H1 (cell line): ENCODE measurements at regions of chr10 and their contacts with region 1.

Region 1: DNA sequence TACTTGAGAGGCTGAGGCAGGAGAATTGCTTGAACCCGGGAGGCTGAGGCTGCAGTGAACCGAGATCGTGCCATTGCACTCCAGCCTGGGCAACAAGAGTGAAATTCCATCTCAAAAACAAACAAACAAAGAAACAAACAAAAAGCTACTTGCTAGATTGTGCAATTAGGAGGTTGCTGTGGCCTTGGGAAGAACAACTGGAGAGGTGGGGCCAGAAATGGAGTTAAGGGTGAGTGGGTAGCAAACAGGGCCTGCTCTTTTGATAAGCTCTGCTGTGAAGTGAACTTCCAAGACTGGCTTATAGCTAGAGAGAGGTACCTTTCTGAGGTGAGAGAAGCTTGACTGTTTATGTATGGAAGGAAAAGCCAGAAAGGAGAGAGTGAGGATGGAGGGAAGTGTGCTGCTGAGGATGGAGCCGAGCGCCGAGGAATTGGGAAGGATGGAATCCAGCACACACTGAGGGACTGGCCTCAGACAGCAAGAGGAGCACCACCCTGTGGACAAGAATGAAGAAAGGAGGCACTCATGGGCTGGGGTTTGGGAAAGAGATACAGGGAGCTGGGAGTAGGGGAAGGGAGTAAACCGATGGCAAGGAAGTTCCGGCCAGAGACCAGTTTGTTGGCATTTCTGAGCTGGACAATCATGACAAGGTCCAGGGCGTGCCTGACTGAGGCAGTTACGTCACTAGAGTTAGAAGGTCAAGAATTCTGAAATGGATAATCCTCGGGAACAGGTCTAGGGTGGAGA is 7.0 kb upstream of the RPEL1 start:
- DNase-seq: peak in 1 of 2 experiments; percentile 39
- H3K4me3 ChIP-seq: no peak overlapping the region
- H3K27ac ChIP-seq: no peak overlapping the region
- H3K4me1 ChIP-seq: peaks cover 2 to 8% (median 6%) of the 10 kb centered on the region in 4 experiments; a peak in 6 of 7 replicates
- H3K27me3 ChIP-seq: no peaks in the 10 kb centered on the region
- CTCF ChIP-seq: peak; percentile 54 to 78 (median 65)
- EP300 ChIP-seq: no peak
- POLR2A ChIP-seq: no peak
- RAD21 ChIP-seq: peak; percentile 86

Region 2: DNA sequence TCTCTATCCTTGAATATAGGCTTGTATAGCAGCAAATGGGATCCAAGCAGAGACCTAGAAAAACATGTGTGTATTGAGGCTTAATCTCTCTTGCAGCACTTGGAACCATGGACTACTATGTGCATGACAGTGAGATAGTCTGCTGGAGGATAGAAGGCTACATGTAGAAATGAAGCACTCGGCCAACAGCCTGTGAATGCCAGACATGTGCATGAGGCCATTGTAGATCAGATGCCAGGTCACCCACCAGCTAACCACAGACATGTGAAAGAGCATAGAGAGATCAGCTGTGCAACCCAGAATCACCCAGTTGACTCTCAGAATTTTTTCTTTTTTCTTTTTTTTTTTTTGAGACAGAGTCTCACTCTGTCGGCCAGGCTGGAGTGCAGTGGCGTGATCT is 136.5 kb before region 1 on chr10:
- CTCF ChIA-PET with region 1: interaction called, 13 read pairs
- POLR2A ChIA-PET with region 1: no interaction called
- DNase-seq: no peak
- H3K4me3 ChIP-seq: no peak overlapping the region
- H3K27ac ChIP-seq: no peak overlapping the region
- H3K4me1 ChIP-seq: peaks cover 0 to 4% (median 0%) of the 10 kb centered on the region in 4 experiments; a peak in 1 of 7 replicates
- H3K27me3 ChIP-seq: no peaks in the 10 kb centered on the region
- CTCF ChIP-seq: no peak
- EP300 ChIP-seq: no peak
- POLR2A ChIP-seq: no peak
- RAD21 ChIP-seq: no peak

Region 3: DNA sequence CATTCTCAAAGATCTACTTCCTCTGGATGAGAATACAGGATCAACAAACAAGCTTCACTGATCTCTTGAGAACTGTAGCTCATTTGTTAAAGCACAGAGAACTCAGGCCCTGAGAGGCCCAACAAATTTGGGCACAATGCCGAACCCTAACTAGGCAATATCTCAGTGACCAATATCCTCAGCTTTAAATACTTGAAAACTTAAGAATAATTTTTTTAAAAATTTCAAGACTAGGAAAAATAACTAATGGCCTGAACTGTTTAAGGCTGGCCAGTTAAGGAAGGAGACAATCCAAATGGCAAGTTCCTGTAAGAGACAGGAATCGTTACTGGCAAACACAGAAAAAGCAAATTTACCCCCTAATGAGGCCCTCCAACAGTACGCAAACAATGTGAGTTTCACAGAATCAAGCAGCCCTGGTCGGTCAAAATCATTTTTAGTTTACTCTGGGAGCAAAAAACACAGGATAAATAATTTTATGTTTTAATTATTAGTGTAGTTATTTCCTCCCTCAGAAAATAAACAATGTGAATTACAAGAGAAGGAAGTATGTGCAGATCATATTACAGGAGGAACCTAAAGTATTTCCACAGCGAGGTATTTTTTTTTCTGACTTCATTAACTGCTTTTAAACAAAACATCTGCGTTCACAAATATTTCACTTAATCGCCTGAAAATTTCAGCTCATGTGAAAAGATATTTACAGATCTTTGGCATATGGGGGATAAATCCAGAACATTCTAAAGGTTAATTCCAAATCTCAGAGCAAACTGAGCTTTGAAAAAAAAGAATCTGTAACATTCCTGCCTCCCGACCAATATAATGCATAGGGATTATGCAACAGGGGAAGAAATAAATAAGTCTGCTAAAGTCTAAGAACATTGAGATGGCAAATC is 85.1 kb before region 1 on chr10:
- CTCF ChIA-PET with region 1: interaction called, 12 read pairs
- POLR2A ChIA-PET with region 1: no interaction called
- DNase-seq: no peak
- H3K4me3 ChIP-seq: peak overlapping the region in 1 of 4 experiments; percentile 44; a peak in 1 of 8 replicates
- H3K27ac ChIP-seq: peak overlapping the region; percentile 48; the same call in 1 of the 2 replicates
- H3K4me1 ChIP-seq: peaks cover 0 to 4% (median 3%) of the 10 kb centered on the region in 4 experiments; a peak in 2 of 7 replicates
- H3K27me3 ChIP-seq: no peaks in the 10 kb centered on the region
- CTCF ChIP-seq: no peak
- EP300 ChIP-seq: no peak
- POLR2A ChIP-seq: no peak
- RAD21 ChIP-seq: no peak

Region 4: DNA sequence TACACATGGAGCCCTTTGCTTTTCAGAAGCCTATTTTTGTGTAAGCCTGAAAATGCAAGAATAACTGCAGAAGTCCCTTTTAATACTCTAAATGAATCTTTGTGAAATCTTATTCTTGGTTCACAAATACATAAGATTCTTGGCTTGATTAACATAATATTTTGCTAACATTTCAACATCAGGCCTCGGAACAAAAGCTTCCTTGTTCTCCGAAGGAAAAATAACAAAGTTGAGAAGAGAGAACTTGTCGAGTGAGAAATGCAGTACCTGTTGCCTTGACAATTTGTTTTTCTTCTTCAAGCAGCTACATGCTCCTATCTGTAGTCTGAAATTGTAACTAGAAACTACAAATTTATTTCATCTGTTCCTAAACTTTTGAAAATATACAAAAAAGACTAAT is 54.1 kb before region 1 on chr10:
- CTCF ChIA-PET with region 1: interaction called, 29 read pairs
- POLR2A ChIA-PET with region 1: interaction called, 3 read pairs
- DNase-seq: no peak
- H3K4me3 ChIP-seq: no peak overlapping the region
- H3K27ac ChIP-seq: no peak overlapping the region; the same call in 1 of the 2 replicates
- H3K4me1 ChIP-seq: 0 out of 7 replicates have a peak, but pooled peaks cover 0 to 5% (median 1%) of the 10 kb centered on the region in 4 experiments
- H3K27me3 ChIP-seq: no peaks in the 10 kb centered on the region
- CTCF ChIP-seq: no peak
- EP300 ChIP-seq: no peak
- POLR2A ChIP-seq: no peak
- RAD21 ChIP-seq: no peak

Region 5: DNA sequence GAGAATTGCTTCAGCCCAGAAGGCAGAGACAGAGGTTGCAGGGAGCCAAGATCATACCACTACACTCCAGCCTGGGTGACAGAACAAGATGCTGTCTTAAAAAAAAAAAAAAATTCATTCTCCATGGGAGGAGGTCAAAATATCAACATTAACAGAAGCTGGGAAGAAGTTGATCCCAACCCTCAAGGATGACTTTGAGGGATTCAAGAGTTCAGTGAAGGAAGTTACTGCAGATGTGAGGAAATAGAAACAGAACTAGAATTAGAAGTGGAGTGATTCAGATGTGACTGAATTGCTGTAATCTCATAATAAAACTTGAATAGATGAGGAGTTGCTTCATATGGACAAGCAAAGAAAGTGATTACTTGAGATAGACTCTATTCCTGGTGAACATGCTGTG is 12.7 kb before region 1 on chr10:
- CTCF ChIA-PET with region 1: interaction called, 15 read pairs
- POLR2A ChIA-PET with region 1: interaction called, 4 read pairs
- DNase-seq: no peak
- H3K4me3 ChIP-seq: no peak overlapping the region
- H3K27ac ChIP-seq: no peak overlapping the region
- H3K4me1 ChIP-seq: peaks cover 0 to 5% (median 2%) of the 10 kb centered on the region in 4 experiments; a peak in 1 of 7 replicates
- H3K27me3 ChIP-seq: no peaks in the 10 kb centered on the region; a peak in 1 of 7 replicates
- CTCF ChIP-seq: no peak
- EP300 ChIP-seq: no peak
- POLR2A ChIP-seq: no peak
- RAD21 ChIP-seq: no peak